ENCODE measurements at regions of chr3 and their contacts with region 1.

Region 1: DNA sequence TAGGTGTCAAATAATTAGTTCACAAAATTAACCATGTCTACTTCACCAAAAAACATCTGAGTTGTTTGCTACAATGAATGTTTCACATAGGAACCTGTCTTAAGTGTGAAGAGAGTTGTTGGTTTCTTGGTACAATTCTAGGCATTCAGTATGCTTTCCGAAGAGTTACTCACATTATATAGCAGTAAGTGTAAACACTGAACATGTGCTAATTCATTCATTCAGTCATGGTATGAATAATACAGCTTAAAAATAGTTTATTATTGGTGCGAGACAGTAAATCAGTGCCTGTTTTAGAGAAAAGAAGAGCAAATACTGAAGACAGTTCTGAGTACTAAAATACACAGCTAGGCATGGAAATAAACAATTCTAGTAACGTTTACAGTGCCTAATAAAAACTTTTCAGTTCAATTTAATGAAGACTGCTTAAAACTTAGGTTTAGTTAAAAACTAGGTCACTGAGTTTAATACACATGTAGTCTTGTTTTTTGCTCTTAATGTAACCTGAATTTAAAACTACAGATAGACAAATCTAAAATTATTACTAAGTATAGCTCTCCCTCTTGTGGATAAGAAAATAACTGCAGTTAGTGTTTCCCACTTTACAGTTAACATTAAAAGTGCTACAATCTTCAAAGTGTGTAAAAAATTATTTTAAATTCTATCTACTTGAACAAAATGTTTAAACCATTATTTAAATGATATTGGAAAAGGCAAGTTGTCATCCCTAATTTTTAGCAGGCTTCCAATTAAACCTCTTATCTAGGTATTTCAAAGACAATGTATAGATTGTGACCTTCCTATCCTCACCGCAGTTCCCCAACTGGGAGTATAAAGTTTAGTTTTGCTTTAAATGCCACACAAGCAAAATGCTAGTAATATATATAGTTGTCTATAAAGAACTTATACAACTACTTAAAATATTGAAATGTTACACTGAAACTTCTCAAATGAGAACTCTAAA is 20.1 kb upstream of the ZCWPW2 start:
- DNase-seq: no peak
- H3K4me3 Mint-ChIP-seq: no peak overlapping the region
- H3K27ac Mint-ChIP-seq: no peak overlapping the region
- H3K4me1 Mint-ChIP-seq: peaks cover 9% of the 10 kb centered on the region
- H3K27me3 Mint-ChIP-seq: no peaks in the 10 kb centered on the region

Region 2: DNA sequence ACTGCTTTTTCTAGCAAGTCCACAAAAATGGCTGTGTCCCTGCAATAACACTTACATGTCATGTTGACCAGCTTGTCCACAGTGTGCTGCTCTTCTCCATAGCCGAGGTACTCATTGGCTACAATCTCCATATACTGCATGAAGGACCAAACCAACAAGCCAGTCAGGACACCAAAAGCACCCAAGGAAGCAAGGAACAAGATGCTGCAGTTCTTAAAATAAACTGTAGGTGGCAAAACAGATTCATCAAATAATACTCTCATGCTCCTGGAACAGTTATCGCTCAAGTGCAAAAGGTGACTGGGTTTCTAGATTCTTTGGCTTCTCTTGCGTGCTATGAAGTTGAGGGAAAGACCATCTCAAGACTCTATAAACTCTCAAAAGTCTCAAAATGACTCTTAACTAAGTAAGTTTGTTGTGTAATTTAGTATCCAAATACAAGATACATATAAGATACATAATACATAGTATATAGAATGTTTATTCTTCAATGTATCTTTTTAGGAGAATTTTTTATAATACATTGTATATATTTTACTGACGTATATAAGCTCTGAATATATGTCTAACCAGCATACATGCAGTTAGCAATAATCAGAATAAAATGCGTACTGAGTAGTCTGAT is 1016.3 kb before region 1 on chr3:
- CTCF ChIA-PET with region 1: no interaction called
- intact Hi-C with region 1: loop called (anchors 5 kb)
- DNase-seq: peak; percentile 8
- H3K4me3 Mint-ChIP-seq: no peak overlapping the region
- H3K27ac Mint-ChIP-seq: no peak overlapping the region
- H3K4me1 Mint-ChIP-seq: no peaks in the 10 kb centered on the region
- H3K27me3 Mint-ChIP-seq: peaks cover 2% of the 10 kb centered on the region

Region 3: GRCh38 chr3:27721717-27722542 is 606.5 kb before region 1 on chr3 and contains the start of gene EOMES:
- CTCF ChIA-PET with region 1: interaction called, 11 read pairs
- intact Hi-C with region 1: loop called (anchors 1 kb)
- DNase-seq: peak; percentile 79
- H3K4me3 Mint-ChIP-seq: peak within 1 kb of the TSS; percentile 75
- H3K27ac Mint-ChIP-seq: no peak within 1 kb of the TSS
- H3K4me1 Mint-ChIP-seq: peaks cover 21% of the 10 kb centered on the region
- H3K27me3 Mint-ChIP-seq: peaks cover 68% of the 10 kb centered on the region
- total RNA-seq, gene EOMES: 0.12 to 0.14 TPM

Region 4: DNA sequence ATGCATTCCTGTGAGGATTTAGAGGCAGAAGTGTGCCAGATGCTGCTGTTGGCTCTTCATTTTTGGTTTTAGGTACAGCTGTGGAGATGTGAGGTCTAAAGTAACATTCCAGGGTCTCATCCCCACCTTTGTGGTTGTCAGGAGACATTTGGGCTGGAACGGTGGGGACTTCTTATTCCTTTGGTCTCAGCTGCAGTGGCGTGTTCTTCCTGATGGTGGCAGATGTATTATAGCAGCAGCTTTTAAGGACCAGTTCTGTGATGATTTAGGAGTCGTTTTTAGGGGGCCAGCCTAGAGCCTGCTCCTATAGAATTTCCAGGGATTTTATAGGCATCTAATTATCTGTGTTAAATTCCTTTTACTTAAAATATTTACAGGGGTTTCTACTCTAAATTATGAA is 385.4 kb before region 1 on chr3:
- CTCF ChIA-PET with region 1: no interaction called
- intact Hi-C with region 1: loop called (anchors 2 kb)
- DNase-seq: peak; percentile 34
- H3K4me3 Mint-ChIP-seq: no peak overlapping the region
- H3K27ac Mint-ChIP-seq: no peak overlapping the region
- H3K4me1 Mint-ChIP-seq: peaks cover 2% of the 10 kb centered on the region
- H3K27me3 Mint-ChIP-seq: no peaks in the 10 kb centered on the region

Region 5: DNA sequence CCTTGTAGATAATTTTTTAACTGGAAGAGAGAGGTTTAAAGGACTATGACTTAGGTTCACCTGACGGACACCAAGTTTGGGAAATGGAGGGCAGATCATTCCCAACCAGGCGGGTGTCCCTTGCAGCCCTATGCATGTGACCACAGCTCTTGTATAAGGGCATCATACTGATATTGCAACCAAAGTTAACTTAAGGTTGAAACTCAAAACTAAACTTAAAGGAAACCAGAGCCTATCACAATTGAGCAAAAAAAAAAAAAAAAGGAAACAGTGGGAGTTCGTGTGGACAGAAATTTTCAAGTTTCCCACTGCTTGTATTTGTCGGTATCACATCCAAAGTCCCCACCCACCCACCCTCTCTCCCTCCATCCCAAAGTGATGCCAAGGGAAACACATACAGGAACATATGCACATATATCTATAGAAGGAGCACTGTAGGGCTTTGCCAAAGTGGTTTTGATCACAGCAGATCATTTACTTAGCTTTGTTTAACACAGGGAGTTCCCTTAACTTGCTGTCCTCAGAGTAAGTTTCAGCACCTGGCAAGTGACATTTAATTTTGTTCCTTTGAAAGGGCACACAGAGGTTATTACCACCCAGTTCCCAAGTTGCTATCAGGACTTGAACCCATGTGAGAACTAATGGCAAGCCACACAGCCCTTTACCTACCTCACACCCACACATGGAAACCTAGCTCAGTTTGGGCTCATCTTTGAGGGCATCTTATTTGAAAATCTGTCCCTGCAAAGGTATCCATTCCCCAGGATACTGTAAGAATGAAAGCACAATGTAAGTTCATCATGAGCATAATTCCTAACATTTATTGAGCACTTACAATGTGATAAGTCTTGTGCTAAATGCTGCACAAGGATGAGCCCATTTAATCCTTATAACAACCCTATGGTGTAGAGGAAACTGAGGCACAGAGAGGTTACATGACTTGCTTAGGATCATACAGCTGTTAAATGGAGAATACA is 291.6 kb before region 1 on chr3:
- CTCF ChIA-PET with region 1: no interaction called
- intact Hi-C with region 1: no loop called
- DNase-seq: no peak
- H3K4me3 Mint-ChIP-seq: no peak overlapping the region
- H3K27ac Mint-ChIP-seq: no peak overlapping the region
- H3K4me1 Mint-ChIP-seq: no peaks in the 10 kb centered on the region
- H3K27me3 Mint-ChIP-seq: no peaks in the 10 kb centered on the region

Region 6: DNA sequence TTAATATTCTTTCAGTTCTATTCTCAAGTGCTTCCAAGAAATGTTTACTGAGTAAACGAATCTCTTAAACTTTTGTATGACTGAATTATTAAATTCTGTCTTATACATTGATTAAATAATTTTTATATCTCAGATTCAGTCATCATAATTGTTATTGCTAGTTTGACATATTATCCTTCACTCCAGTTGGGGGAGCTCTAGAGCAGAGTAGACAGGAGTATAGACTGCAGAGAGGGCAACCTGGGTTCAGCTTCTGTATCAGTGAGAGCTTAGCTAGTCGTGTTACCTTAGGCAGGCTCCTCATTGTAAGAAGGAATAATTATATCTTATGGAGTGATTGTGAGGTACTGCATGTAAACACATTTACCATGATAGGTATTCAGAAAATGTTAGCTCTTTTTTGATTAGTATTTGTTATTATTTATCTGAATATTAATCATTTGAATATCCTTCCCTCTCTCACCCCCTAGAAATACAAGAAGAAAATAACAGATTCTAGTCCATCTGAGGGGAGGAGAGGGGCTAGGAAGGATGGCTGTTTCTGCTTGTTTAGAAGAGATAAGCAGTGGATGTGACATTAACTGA is 10.9 kb before region 1 on chr3:
- CTCF ChIA-PET with region 1: interaction called, 12 read pairs
- intact Hi-C with region 1: loop called (anchors 1 kb)
- DNase-seq: peak; percentile 18
- H3K4me3 Mint-ChIP-seq: no peak overlapping the region
- H3K27ac Mint-ChIP-seq: no peak overlapping the region
- H3K4me1 Mint-ChIP-seq: no peaks in the 10 kb centered on the region
- H3K27me3 Mint-ChIP-seq: no peaks in the 10 kb centered on the region

Measured in activated naive CD4-positive, alpha-beta T cell treated with anti-CD3 and anti-CD28 coated beads for 36 hours (primary cell).